ENCODE measurements at regions of chrX and their contacts with region 1.

Region 1: GRCh38 chrX:152632445-152633097 is 5.1 kb upstream of the GABRQ start:
- DNase-seq: no peak
- H3K4me3 ChIP-seq: no peak overlapping the region
- CTCF ChIP-seq: peak; percentile 67

Region 2: DNA sequence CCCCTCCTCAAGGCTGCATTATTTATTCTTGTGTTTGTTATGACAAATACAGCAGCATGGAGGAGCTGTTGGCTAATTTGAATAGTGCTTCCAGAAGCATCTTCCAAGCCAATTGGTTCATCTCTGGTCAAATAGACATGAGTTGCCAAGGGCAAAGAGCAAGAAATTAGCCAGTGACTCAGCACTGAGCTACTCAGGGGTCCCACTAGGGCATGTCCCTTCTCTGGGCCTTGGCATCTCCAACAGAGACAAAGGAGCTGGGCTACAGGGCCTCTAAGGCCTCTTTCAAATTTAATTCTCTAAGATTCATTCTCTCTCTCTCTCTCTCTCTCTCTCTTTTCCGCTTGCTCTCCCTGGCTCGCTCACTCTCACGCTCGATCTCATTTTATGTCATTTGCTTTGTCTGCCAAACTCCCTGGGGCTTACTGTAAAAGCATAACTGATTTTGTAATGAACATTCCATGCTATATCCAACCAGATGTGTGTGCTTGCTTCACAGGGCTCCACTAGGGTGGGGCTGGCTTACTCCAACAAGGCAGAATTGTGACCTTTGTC is 806.6 kb before region 1 on chrX:
- CTCF ChIA-PET with region 1: interaction called, 17 read pairs
- POLR2A ChIA-PET with region 1: no interaction called
- DNase-seq: peak; percentile 74
- H3K4me3 ChIP-seq: no peak overlapping the region
- CTCF ChIP-seq: no peak